ENCODE measurements at regions of chr7 and their contacts with region 1.

Region 1: GRCh38 chr7:80060218-80060806 is 74.3 kb upstream of the GNAI1 start:
- DNase-seq: no peak

Region 2: DNA sequence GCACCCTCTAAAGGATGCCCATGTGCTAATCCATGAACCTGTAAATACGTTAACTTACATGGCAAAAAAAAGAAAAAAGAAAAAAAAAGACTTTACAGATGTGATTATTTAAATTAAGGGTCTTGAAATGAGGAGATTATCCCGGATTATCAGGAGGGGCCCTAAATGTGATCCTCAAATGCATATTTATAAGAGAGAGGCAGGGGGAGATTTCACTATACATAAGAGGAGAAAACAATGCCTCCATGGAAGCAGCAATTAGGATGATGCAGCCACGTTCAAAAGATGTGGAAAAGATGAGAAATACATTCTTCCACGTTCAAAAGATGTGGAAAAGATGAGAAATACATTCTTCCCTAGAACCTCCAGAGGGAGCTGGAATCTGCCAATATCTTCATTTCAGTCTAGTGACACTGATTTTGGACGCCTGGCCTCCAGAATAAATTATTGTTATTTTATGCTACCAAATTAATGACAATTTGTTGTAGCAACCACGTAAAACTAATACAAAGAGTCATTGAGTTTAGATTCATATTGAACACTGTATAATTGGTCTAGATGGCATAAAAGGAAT is 254.1 kb before region 1 on chr7:
- intact Hi-C with region 1: no loop called
- DNase-seq: no peak

Region 3: GRCh38 chr7:80114159-80114558 is 53.8 kb after region 1 on chr7:
- intact Hi-C with region 1: no loop called
- DNase-seq: no peak

Region 4: GRCh38 chr7:80392229-80393169 is 332.2 kb after region 1 on chr7:
- intact Hi-C with region 1: loop called (anchors 2 kb)
- DNase-seq: no peak